Activated CD4-positive, alpha-beta memory T cell treated with anti-CD3 and anti-CD28 coated beads for 36 hours (primary cell): ENCODE measurements at regions of chr19 and their contacts with region 1.

Region 1: DNA sequence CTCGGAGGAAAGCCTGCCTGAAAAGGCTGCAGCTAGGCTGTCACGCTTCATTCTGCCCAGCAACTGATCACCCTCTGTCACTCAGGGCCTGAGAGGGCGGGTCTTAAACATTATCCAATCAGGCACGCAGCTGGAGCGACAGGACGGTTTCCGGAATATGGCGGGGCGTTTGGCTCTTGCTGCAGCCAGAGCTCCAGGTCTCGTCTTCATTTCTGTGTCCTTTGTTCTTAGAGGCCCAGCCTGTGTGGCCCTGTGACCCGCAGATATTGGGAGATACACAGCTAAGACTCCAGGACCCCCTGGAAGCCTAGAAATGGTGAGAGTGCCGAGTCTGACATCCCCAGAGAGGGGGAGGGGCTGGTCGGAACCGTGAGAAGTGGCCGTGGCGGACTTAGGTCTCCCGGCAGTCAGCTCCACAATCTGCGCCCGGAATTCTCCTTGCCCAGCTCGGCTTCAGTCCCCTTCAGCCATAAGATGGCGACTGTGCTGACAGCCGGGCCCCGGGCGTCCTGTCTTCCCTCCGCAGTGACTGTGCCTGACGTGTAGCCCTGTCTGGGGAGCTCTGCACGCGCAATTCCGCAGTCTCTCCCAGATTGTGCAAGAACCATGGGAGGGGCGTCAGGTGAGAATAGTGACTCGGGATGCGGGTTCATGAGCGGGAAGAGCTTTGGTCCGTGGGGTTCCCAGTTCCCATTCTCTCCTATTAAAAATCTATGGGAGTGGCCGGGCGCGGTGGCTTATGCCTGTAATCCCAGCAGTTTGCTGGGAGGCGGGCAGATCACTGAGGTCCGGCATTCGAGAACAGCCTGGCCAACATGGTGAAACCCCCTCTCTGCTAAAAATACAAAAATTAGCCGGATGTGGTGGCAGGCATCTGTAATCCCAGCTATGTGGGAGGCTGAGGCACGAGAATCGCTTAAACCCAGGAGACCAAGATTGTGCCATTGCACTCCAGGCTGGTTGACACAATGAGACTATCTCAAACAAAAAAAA is at the start of gene ZNF429:
- DNase-seq: peak; percentile 94
- H3K4me3 Mint-ChIP-seq: peak within 1 kb of the TSS; percentile 100
- H3K27ac Mint-ChIP-seq: peak within 1 kb of the TSS; percentile 99
- H3K4me1 Mint-ChIP-seq: peaks cover 33% of the 10 kb centered on the region
- H3K27me3 Mint-ChIP-seq: no peaks in the 10 kb centered on the region
- total RNA-seq, gene ZNF429: 9.0 to 9.5 TPM

Region 2: GRCh38 chr19:20776083-20777076 is 729.4 kb before region 1 on chr19 and contains the start of gene ZNF66:
- CTCF ChIA-PET with region 1: no interaction called
- POLR2A ChIA-PET with region 1: interaction called, 4 read pairs
- intact Hi-C with region 1: loop called (anchors 10 kb)
- DNase-seq: peak; percentile 97
- H3K4me3 Mint-ChIP-seq: peak within 1 kb of the TSS; percentile 100
- H3K27ac Mint-ChIP-seq: peak within 1 kb of the TSS; percentile 97
- H3K4me1 Mint-ChIP-seq: peaks cover 16% of the 10 kb centered on the region
- H3K27me3 Mint-ChIP-seq: no peaks in the 10 kb centered on the region
- total RNA-seq, gene ZNF66: 5.0 to 6.0 TPM

Region 3: DNA sequence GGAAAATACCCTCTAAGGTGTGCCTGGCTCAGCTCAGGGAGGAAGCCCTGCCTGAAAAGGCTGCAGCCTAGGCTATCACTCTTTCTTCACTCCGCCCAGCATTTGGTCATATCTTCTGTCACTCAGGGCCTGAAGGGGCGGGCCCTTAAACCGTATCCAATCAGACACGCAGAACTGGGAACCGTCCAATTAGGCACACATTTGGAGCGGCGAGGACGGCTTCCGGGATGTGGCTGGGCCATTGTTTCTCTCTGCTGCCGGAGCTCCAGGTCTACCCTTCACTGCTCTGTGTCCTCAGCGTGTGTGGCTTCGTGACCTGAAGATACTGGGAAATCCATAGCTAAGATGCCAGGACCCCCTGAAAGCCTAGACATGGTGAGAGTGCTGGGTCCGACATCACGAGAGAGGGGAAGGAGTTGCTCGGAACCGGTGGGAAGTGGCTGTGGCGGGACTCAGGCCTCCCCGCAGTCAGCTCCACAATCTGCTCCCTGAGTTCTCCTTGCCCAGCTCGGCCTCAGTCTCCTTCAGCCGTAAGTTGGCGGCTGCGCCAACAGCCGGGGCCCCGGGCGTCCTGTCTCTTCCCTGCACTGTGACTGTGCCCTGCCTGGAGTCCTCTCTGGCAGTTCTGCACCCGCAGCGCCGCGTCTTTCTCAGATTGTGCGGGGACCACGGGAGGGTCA is 108.7 kb before region 1 on chr19 and contains the start of gene ZNF493:
- CTCF ChIA-PET with region 1: interaction called, 3 read pairs
- POLR2A ChIA-PET with region 1: no interaction called
- intact Hi-C with region 1: loop called (anchors 1 kb)
- DNase-seq: peak; percentile 95
- H3K4me3 Mint-ChIP-seq: peak within 1 kb of the TSS; percentile 95
- H3K27ac Mint-ChIP-seq: peak within 1 kb of the TSS; percentile 87
- H3K4me1 Mint-ChIP-seq: peaks cover 24% of the 10 kb centered on the region
- H3K27me3 Mint-ChIP-seq: no peaks in the 10 kb centered on the region
- total RNA-seq, gene ZNF493: 9.6 to 11.1 TPM

Region 4: GRCh38 chr19:21423057-21424041 is 82.4 kb before region 1 on chr19:
- CTCF ChIA-PET with region 1: no interaction called
- POLR2A ChIA-PET with region 1: no interaction called
- intact Hi-C with region 1: no loop called
- DNase-seq: no peak
- H3K4me3 Mint-ChIP-seq: no peak overlapping the region
- H3K27ac Mint-ChIP-seq: no peak overlapping the region
- H3K4me1 Mint-ChIP-seq: no peaks in the 10 kb centered on the region
- H3K27me3 Mint-ChIP-seq: no peaks in the 10 kb centered on the region

Region 5: DNA sequence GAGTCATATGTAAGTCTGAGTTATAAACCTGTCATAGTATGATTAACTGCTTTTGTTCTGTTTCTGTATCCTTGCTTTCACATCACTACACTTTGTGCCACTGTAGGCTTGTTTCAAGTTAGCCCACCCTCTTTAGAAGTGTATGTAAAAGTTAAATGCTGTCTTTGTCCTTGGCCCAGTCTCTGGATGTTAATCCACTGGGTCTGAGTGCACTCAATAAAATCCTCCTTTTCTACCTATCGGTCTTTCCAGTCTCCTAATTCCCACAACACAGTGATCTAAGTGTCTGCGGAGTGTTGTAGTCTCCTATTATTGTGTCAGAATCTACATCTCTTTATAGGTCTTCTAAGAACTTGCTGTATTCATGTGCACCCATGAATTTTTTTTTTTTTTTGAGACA is 13.7 kb after region 1 on chr19:
- CTCF ChIA-PET with region 1: no interaction called
- POLR2A ChIA-PET with region 1: no interaction called
- intact Hi-C with region 1: no loop called
- DNase-seq: no peak
- H3K4me3 Mint-ChIP-seq: no peak overlapping the region
- H3K27ac Mint-ChIP-seq: no peak overlapping the region
- H3K4me1 Mint-ChIP-seq: peaks cover 5% of the 10 kb centered on the region
- H3K27me3 Mint-ChIP-seq: no peaks in the 10 kb centered on the region

Region 6: GRCh38 chr19:21568816-21569493 is 63.2 kb after region 1 on chr19:
- CTCF ChIA-PET with region 1: interaction called, 9 read pairs
- POLR2A ChIA-PET with region 1: interaction called, 10 read pairs
- intact Hi-C with region 1: loop called (anchors 2 kb)
- DNase-seq: peak; percentile 92
- H3K4me3 Mint-ChIP-seq: peak overlapping the region; percentile 94
- H3K27ac Mint-ChIP-seq: peak overlapping the region; percentile 91
- H3K4me1 Mint-ChIP-seq: peaks cover 23% of the 10 kb centered on the region
- H3K27me3 Mint-ChIP-seq: no peaks in the 10 kb centered on the region

Region 7: GRCh38 chr19:21767065-21767800 is 261.5 kb after region 1 on chr19 and contains the start of gene ZNF100:
- CTCF ChIA-PET with region 1: interaction called, 5 read pairs
- POLR2A ChIA-PET with region 1: interaction called, 8 read pairs
- intact Hi-C with region 1: loop called (anchors 1 kb)
- DNase-seq: peak; percentile 92
- H3K4me3 Mint-ChIP-seq: peak within 1 kb of the TSS; percentile 92
- H3K27ac Mint-ChIP-seq: peak within 1 kb of the TSS; percentile 81
- H3K4me1 Mint-ChIP-seq: peaks cover 22% of the 10 kb centered on the region
- H3K27me3 Mint-ChIP-seq: no peaks in the 10 kb centered on the region
- total RNA-seq, gene ZNF100: 20.9 to 23.6 TPM